CD4-positive, alpha-beta memory T cell (primary cell): ENCODE measurements at regions of chr22 and their contacts with region 1.

Region 1: GRCh38 chr22:24423519-24424000 is 3.8 kb upstream of the ADORA2A start:
- DNase-seq: peak in 4 of 5 donors; percentile 44 to 64 (median 57)
- H3K4me3 ChIP-seq: peak overlapping the region in 1 of 2 donors; percentile 32
- H3K4me3 Mint-ChIP-seq: peak overlapping the region in 7 of 8 donors; percentile 40 to 75 (median 65)
- H3K27ac ChIP-seq: no peak overlapping the region
- H3K27ac Mint-ChIP-seq: peak overlapping the region in 1 of 7 donors; percentile 86
- H3K4me1 ChIP-seq: peaks cover 37% of the 10 kb centered on the region
- H3K4me1 Mint-ChIP-seq: peaks cover 26 to 41% (median 33%) of the 10 kb centered on the region in 4 donors
- H3K27me3 ChIP-seq: no peaks in the 10 kb centered on the region
- H3K27me3 Mint-ChIP-seq: no peaks in the 10 kb centered on the region

Region 2: DNA sequence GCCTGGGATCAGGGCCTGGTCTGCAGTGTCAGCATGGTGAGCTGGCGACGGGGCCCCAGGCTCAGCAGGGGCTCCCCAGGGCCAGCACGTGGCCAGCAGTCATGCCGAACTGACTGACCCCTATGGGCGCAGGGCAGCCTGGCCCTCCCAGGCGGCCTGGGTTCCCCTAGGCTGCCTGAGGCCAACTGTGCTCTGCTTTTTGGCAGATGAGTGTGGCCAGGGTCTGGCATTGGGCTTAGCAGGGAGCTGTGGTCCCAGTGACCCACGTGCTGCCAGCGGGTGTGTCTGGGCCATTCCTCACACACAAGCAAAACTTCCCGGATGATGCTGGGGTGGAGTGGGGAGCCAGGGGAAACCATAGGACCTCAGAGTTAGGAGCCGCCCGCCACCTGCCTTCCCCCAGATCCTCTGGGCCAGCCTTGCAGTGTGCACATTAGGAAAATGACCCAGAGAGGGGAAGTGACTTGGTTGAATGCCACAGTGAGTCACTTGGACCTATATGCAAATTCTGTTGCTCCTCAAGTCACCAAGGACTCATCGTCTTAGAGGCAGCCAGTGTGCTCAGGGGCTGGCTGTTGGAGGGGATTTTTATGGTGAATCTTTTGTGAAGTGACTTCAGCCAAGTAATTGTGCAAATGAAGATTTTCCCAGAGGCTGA is 10.4 kb after region 1 on chr22:
- CTCF ChIA-PET with region 1: interaction called, 14 read pairs
- POLR2A ChIA-PET with region 1: interaction called, 35 read pairs
- intact Hi-C with region 1: loop called (anchors 1 kb)
- DNase-seq: peak in 1 of 5 donors; percentile 85
- H3K4me3 ChIP-seq: no peak overlapping the region
- H3K4me3 Mint-ChIP-seq: peak overlapping the region; percentile 52 to 88 (median 70)
- H3K27ac ChIP-seq: peak overlapping the region; percentile 59
- H3K27ac Mint-ChIP-seq: peak overlapping the region; percentile 87 to 100 (median 92)
- H3K4me1 ChIP-seq: peaks cover 89% of the 10 kb centered on the region
- H3K4me1 Mint-ChIP-seq: peaks cover 41 to 92% (median 75%) of the 10 kb centered on the region in 4 donors
- H3K27me3 ChIP-seq: no peaks in the 10 kb centered on the region
- H3K27me3 Mint-ChIP-seq: peaks cover 0 to 3% of the 10 kb centered on the region in 2 donors

Region 3: DNA sequence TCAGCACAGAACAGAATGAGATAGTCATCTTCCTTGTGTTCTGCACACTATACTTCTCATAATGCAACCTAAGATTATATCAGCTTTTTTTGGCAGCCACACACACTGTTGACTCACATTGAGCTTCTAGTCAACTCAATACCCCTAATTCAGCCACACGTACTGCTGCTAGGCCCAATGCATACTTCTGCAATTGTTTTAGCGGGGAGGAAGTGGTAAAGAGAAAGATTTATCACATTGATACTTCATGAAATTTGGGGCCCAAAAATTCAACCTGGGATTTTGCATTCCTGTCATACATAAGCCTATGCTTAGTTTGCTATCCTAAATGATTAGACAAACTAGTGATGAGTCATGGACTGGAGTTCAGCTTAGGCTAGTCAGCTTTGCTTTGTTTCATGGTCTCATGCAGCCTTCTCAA is 63.0 kb after region 1 on chr22:
- CTCF ChIA-PET with region 1: interaction called, 19 read pairs
- POLR2A ChIA-PET with region 1: interaction called, 4 read pairs
- intact Hi-C with region 1: loop called (anchors 1 kb)
- DNase-seq: no peak
- H3K4me3 ChIP-seq: no peak overlapping the region
- H3K4me3 Mint-ChIP-seq: no peak overlapping the region
- H3K27ac ChIP-seq: no peak overlapping the region
- H3K27ac Mint-ChIP-seq: peak overlapping the region in 3 of 7 donors; percentile 14 to 59 (median 18)
- H3K4me1 ChIP-seq: no peaks in the 10 kb centered on the region
- H3K4me1 Mint-ChIP-seq: peaks cover 5 to 11% (median 8%) of the 10 kb centered on the region in 4 donors
- H3K27me3 ChIP-seq: no peaks in the 10 kb centered on the region
- H3K27me3 Mint-ChIP-seq: peaks cover 0 to 4% of the 10 kb centered on the region in 2 donors

Region 4: DNA sequence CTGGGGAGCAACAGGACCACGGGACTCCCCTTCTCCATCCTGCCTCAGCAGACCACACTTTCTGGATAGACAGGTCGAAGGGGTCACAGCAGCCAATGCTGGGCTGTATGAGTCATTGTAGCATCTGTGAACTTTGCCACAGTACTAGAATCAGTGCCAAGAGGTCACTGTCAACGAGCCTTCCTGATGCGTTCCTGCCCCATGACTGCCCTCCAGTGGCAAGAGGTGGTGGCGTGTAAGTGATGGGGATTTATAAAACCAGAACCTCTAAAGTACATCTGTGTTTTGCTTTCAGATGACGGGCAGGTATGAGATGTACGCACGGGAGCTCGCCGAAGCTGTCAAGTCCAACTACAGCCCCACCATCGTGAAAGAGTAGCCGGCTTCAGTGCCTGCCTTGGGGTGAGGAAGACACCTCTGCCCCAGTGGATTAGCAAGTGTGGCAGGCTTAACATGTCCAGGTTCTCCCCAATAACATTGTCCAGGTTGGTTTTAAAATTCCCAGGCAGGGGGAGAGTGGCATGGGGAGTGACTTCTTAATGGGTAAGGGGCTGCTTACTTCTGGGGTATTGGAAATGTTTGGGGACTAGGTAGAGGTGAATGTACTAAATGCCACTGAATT is 102.0 kb after region 1 on chr22:
- CTCF ChIA-PET with region 1: interaction called, 38 read pairs
- POLR2A ChIA-PET with region 1: interaction called, 5 read pairs
- intact Hi-C with region 1: loop called (anchors 1 kb)
- DNase-seq: peak; percentile 68 to 79 (median 70)
- H3K4me3 ChIP-seq: no peak overlapping the region
- H3K4me3 Mint-ChIP-seq: no peak overlapping the region
- H3K27ac ChIP-seq: no peak overlapping the region
- H3K27ac Mint-ChIP-seq: peak overlapping the region in 1 of 7 donors; percentile 65
- H3K4me1 ChIP-seq: peaks cover 7% of the 10 kb centered on the region
- H3K4me1 Mint-ChIP-seq: peaks cover 8 to 12% (median 10%) of the 10 kb centered on the region in 4 donors
- H3K27me3 ChIP-seq: no peaks in the 10 kb centered on the region
- H3K27me3 Mint-ChIP-seq: no peaks in the 10 kb centered on the region

Region 5: DNA sequence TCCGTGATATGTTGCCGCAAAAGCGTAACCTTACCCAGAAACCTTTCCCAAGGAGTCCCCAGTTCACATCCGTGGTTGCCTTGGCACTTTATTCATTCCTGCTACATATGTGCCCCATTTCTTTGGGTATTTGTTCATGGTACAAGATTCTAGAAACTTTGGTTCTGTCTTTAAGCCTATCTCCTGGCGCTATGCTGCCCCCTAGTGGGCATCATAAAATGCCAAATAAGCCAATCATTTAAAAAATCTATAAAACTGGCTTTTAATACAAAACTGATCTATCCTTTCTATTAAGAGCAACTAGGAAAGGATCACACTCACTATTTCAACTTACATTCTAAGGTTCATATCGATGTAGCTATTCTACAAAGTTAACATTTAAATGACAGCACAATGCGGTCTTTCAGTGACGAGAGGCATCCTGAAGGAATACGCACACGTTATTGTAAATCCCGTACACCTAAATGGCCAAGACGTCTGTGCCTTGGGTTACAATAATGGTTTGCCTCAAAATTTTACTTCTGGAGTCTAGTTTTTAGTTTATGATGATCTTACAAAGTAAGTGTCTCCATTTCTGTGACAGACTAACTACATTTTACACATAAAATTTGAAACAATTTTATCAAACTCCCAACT is 334.7 kb after region 1 on chr22:
- CTCF ChIA-PET with region 1: no interaction called
- POLR2A ChIA-PET with region 1: no interaction called
- intact Hi-C with region 1: loop called (anchors 5 kb)
- DNase-seq: peak; percentile 41 to 49 (median 46)
- H3K4me3 ChIP-seq: no peak overlapping the region
- H3K4me3 Mint-ChIP-seq: no peak overlapping the region
- H3K27ac ChIP-seq: no peak overlapping the region
- H3K27ac Mint-ChIP-seq: no peak overlapping the region
- H3K4me1 ChIP-seq: no peaks in the 10 kb centered on the region
- H3K4me1 Mint-ChIP-seq: no peaks in the 10 kb centered on the region
- H3K27me3 ChIP-seq: no peaks in the 10 kb centered on the region
- H3K27me3 Mint-ChIP-seq: peaks cover 0 to 7% of the 10 kb centered on the region in 2 donors

Region 6: DNA sequence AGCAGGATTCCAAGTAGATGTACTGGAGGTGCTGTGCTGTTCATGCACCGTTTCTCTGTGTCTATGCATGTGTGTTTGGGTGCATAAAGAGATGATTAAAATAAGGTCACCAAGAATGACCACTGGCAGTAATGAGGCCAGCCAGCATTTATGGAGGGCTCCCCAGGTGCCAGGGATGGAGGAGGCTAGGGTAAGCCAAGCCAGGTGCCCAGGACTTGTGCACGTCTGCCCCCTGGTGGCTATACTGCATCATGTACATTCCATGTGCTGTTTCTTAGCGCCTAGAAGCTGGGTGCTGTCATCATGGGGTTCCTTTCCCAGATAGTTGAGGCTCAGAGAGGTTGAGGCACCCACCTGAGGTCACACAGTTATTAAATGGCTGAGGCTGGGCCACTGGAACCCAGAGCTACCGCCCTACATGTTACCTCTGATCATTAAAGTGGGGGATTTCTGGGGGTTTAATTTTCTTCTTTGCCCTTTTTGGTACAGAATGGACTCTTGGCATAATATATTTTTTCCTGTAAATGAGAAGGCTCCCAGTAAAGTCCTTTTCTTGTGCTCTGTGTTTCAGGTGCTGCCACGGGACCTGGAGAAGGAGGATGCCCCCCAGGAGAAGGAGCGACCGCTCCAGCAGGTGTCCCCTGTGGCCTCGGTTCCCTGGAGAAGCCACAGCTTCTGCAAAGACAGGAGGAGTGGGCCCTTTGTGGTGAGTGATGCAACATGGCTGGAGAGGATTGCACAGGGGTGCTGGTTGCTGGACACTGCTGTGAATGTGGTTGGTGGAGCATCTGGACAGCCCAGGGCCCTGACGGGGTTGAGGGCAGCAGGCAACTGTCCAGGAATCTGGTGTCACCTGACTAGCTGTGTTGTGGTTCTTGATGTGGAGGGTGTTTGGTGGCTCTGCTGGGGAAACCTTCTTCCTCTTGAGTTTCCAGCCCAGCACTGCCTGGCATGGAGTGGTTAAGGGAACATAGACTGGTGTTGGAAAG is 625.4 kb after region 1 on chr22:
- CTCF ChIA-PET with region 1: no interaction called
- POLR2A ChIA-PET with region 1: no interaction called
- intact Hi-C with region 1: no loop called
- DNase-seq: peak; percentile 49 to 68 (median 65)
- H3K4me3 ChIP-seq: no peak overlapping the region
- H3K4me3 Mint-ChIP-seq: no peak overlapping the region
- H3K27ac ChIP-seq: no peak overlapping the region
- H3K27ac Mint-ChIP-seq: peak overlapping the region in 1 of 7 donors; percentile 52
- H3K4me1 ChIP-seq: no peaks in the 10 kb centered on the region
- H3K4me1 Mint-ChIP-seq: no peaks in the 10 kb centered on the region
- H3K27me3 ChIP-seq: no peaks in the 10 kb centered on the region
- H3K27me3 Mint-ChIP-seq: peaks cover 2 to 3% of the 10 kb centered on the region in 2 donors